Heart right ventricle (tissue), 16 donors: ENCODE measurements at regions of chr13 and their contacts with region 1.

Region 1: DNA sequence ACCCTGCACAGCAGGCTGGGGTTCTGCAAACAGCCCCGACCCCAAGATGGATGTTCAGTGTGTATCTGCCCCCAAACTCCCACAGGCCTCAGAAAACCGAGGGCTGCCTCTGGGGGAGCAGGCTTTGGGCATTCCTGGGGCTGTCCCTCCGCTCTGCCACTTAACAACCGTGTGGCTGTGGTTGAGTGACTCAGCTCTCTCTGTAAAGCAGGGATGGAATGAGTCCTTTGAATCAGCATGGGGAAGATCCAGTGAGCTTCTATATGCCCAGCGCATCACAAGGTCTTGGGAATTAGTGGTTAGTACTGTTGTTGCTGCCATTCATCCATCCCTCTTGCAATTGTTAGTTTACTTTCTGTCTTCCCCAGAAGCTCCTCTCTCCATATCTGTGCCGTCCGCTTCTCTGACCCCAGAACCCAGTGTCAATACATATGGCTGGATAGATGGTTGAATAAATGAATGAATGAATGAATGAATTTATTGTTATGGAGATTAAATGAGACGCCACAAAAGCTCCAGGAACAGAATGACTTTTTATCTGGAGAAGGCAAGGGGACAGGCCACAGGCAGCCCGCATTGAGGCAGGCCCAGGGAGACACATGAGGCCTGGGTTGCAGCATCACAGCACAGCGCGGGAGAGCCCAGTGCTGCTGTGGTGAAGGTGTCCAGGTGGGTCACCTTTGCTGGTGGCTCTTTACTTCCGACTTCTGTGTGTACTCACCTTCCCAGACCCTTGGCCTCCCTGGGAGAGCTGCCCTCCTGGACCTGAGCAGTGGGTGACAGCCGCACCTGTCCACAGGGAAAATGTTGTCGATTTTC is 89.2 kb downstream of the RGCC start:
- DNase-seq: no peak
- ATAC-seq: peak in 1 of 8 donors; percentile 0
- H3K4me3 ChIP-seq: no peak overlapping the region
- H3K27ac ChIP-seq: peak overlapping the region in 9 of 10 donors; percentile 68 to 85 (median 76)
- H3K4me1 ChIP-seq: peaks cover 0 to 32% (median 18%) of the 10 kb centered on the region in 9 donors
- H3K27me3 ChIP-seq: no peaks in the 10 kb centered on the region
- CTCF ChIP-seq: no peak

Region 2: GRCh38 chr13:41231786-41232185 is 314.8 kb before region 1 on chr13:
- intact Hi-C with region 1: no loop called
- DNase-seq: no peak
- ATAC-seq: no peak
- H3K4me3 ChIP-seq: no peak overlapping the region
- H3K27ac ChIP-seq: no peak overlapping the region
- H3K4me1 ChIP-seq: no peaks in the 10 kb centered on the region
- H3K27me3 ChIP-seq: no peaks in the 10 kb centered on the region
- CTCF ChIP-seq: no peak

Region 3: DNA sequence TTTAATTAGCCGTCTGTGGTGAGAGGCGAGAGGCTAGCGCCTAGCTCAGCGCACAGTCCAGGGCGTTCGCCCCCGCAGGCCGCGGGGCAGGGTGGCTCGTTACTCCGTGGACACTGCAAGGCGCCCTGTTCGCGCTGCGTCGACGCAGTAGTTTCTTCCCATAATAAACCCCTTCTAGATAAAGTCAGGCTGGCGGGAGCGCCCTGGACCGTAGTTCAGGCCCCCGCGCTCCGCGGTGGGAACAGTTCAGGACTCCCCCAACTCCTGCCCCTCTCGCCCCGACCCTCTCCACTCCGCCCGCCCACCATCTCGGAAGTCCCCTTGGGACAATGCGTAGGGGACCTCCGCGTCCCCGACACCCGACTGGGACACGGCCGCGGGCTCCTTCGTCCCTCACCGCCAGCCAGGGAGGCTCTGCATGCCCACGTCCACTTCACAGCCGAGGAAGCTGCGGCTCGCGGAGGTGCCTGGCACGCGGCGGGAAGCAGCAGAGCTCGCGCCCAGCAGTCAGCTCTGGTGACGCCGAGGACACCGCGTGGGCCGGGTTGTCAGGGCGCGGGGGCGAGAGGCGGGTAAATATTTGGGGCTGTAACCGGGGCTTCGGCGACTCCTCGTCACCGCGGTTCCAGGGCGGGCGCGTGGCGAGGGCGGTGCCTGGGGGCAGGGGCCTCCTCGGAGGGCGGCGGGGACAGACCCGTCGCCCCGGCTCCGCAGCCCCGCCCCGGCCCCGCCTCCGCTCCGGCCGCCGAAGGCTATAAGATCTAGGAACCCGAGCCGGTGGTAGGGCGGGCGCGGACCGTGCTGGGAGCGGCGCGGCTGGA is 89.6 kb before region 1 on chr13 and contains the start of gene RGCC:
- intact Hi-C with region 1: loop called in 2 of 10 experiments (anchors 5 kb)
- DNase-seq: peak; percentile 80 to 83
- ATAC-seq: peak; percentile 83 to 92 (median 90)
- H3K4me3 ChIP-seq: peak within 1 kb of the TSS; percentile 62 to 91 (median 74)
- H3K27ac ChIP-seq: peak within 1 kb of the TSS; percentile 76 to 91 (median 84)
- H3K4me1 ChIP-seq: peaks cover 0 to 34% (median 19%) of the 10 kb centered on the region in 9 donors
- H3K27me3 ChIP-seq: peaks cover 0 to 33% (median 11%) of the 10 kb centered on the region in 7 donors
- CTCF ChIP-seq: no peak
- total RNA-seq, gene RGCC: 15.6 to 63.2 (median 40.0) TPM

Region 4: DNA sequence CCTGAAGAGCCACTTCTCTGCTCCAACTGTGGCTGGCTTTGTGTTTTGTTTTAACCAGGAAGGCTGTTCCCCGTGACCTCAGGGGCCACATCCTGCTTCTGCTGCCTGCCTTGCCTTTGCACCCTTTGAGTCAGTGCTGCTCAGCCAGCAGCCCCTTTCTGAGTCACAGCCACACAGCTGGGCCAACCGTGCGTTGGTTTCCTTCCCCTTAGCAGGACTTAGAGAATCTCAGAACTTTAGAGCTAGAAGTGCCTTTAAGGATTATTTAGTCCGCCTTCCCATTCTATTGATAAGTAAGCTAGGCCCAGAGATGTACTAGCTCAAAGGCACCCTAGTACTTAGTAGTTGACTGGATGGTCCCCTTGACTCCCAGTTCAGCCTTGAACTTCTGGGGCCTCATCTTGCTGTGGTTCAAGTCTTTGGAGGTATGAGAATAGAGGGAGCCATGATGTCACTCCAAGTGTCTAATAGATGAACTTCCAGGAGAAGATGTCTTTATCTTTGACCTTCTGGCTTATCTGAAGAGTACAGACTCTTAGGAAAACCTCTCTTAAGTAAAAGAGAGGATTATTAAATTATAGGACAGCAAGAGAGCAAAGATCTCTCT is 81.2 kb before region 1 on chr13:
- intact Hi-C with region 1: loop called in 1 of 10 experiments (anchors 5 kb)
- DNase-seq: peak; percentile 51 to 66
- ATAC-seq: peak; percentile 44 to 88 (median 78)
- H3K4me3 ChIP-seq: peak overlapping the region in 1 of 10 donors; percentile 62
- H3K27ac ChIP-seq: peak overlapping the region in 9 of 10 donors; percentile 28 to 86 (median 71)
- H3K4me1 ChIP-seq: peaks cover 3 to 67% (median 31%) of the 10 kb centered on the region in 9 donors
- H3K27me3 ChIP-seq: peaks cover 0 to 4% (median 0%) of the 10 kb centered on the region in 7 donors
- CTCF ChIP-seq: no peak

Region 5: DNA sequence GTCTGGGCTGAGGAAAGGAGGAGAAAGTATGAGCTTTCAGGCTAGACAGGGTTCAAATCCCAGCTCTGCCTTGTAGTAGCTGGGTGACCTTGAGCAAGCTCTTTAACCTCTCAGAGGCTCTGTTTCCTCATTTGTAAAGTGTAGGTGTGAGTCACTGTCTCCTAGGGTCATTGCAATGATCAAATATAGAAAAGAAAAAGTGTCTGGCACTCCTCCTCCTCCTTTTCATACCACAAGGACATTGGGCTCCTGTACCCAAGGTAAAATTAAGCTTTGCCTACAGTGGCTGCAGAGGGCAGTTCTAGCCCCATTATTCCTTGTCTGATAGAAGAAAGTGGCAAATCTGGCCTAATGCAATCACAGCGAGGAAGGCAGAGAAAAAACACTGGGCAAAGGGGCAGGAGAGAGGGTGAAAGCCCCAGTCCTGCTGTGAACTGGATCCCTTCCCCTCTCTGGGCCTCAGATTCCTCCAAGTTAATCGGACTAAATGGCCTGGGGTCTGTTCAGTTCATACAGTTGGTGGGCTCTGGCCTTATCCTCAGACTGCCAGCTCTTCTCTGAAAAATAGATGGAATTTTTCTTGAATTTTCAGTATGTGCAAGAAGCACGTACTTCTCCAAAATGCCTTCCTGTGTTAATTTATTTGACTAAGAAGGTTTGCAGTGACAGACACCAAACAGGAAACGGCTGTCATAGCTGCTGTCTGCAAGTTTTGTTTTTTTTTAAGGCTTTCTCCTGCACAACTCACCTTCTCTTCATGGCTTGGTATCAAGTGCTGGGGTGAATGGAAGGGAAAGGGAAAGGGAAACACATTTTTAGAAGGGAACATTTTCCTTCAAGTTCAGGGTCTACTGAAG is 53.9 kb before region 1 on chr13:
- intact Hi-C with region 1: loop called in 2 of 10 experiments (anchors 5 kb)
- DNase-seq: no peak
- ATAC-seq: peak in 2 of 8 donors; percentile 3 to 22
- H3K4me3 ChIP-seq: no peak overlapping the region
- H3K27ac ChIP-seq: peak overlapping the region in 7 of 10 donors; percentile 30 to 86 (median 68)
- H3K4me1 ChIP-seq: peaks cover 14 to 59% (median 43%) of the 10 kb centered on the region in 9 donors
- H3K27me3 ChIP-seq: no peaks in the 10 kb centered on the region
- CTCF ChIP-seq: no peak

Region 6: GRCh38 chr13:41613984-41614661 is 67.5 kb after region 1 on chr13:
- intact Hi-C with region 1: loop called in 1 of 10 experiments (anchors 5 kb)
- DNase-seq: peak; percentile 48 to 77
- ATAC-seq: peak; percentile 90 to 96 (median 93)
- H3K4me3 ChIP-seq: no peak overlapping the region
- H3K27ac ChIP-seq: peak overlapping the region; percentile 28 to 87 (median 72)
- H3K4me1 ChIP-seq: peaks cover 13 to 54% (median 40%) of the 10 kb centered on the region in 9 donors
- H3K27me3 ChIP-seq: no peaks in the 10 kb centered on the region
- CTCF ChIP-seq: no peak

Region 7: GRCh38 chr13:41645331-41645730 is 98.8 kb after region 1 on chr13:
- intact Hi-C with region 1: loop called in 2 of 10 experiments (anchors 2 to 5 kb)
- DNase-seq: no peak
- ATAC-seq: peak in 6 of 8 donors; percentile 49 to 84 (median 70)
- H3K4me3 ChIP-seq: no peak overlapping the region
- H3K27ac ChIP-seq: peak overlapping the region; percentile 6 to 80 (median 47)
- H3K4me1 ChIP-seq: peaks cover 2 to 79% (median 44%) of the 10 kb centered on the region in 9 donors
- H3K27me3 ChIP-seq: no peaks in the 10 kb centered on the region
- CTCF ChIP-seq: no peak